ENCODE measurements at regions of chr15 and their contacts with region 1.

Region 1: DNA sequence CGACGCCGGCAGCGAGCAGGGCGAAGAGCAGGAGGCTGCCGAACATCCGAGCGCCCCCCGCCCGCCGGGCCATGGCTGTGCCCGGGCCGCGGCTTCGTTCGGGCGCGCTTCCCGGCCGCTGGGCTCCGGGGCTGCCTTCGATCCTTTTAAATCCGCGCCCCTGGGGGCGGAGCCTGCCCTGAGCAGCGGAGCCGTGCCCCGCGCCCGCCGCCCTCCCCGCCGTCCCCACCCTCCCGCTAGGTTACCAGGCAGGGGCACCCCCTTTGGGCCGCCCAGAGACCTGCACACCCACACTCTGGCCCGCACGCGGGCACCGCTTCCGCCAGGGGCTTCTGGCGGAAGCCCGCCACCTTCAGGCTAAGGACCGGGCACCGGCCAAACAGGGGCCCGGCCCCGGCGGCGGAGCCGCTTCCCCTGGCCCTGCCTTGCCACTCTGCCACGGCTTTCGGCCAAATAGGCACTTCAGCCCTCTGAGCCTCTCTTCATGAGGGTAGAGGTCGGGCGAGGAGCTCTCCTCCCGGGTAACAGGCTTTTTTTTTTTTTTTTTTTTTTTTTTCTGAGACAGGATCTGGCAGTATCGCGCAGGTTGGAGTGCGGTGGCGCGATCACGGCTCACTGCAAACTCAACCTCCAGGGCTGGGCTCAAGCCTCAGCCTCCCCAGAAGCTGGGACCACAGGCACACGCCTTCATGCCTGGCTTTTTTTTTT is at the start of gene NMB:
- DNase-seq: peak; percentile 91
- ATAC-seq: peak; percentile 73
- H3K4me3 Mint-ChIP-seq: peak within 1 kb of the TSS; percentile 77
- H3K27ac Mint-ChIP-seq: 0 out of 2 replicates have a peak within 1 kb of the TSS, but pooled peaks have one; percentile 53
- H3K4me1 Mint-ChIP-seq: peaks cover 35% of the 10 kb centered on the region
- H3K27me3 Mint-ChIP-seq: peaks cover 21% of the 10 kb centered on the region
- CTCF ChIP-seq: peak; percentile 44; the same call in 1 of the 2 replicates
- total RNA-seq, gene NMB: 14.9 to 16.2 TPM (median 15.3 TPM) in 3 replicates

Region 2: DNA sequence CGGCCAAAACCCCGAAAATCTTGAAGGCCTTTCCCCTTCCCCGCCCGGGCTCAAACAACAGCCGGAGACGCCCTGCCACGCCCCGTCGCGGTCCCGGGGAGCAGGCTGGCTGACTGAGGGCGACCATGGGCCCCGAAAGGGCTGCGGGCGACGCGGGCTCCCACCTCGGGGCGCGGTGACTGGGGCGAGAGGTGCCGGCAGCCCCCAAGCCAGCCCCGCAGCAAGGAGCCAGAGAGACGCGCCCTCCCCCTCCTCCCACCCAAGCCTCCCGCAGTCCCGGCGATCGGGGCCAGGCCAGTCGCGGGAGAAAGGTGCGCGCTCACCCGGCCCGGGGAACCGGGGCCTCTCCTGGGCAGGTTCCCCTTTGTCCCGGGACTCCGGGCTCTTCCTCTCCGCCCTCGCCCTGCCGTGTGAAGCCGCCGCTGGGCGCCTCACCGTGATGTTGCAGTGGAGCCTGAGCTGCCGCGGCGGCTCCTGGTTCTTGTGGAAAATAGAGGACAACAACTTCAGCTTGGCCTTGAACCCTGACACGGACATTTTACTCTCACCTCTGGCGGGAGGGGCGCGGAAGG is 88.0 kb before region 1 on chr15:
- CTCF ChIA-PET with region 1: interaction called, 15 read pairs
- POLR2A ChIA-PET with region 1: no interaction called
- DNase-seq: peak; percentile 45
- ATAC-seq: peak; percentile 40
- H3K4me3 Mint-ChIP-seq: peak overlapping the region; percentile 82
- H3K27ac Mint-ChIP-seq: no peak overlapping the region
- H3K4me1 Mint-ChIP-seq: peaks cover 11% of the 10 kb centered on the region
- H3K27me3 Mint-ChIP-seq: no peaks in the 10 kb centered on the region; the same call in 1 of the 2 replicates
- CTCF ChIP-seq: no peak

Region 3: GRCh38 chr15:84600851-84601838 is 57.1 kb before region 1 on chr15 and contains the start of gene ZSCAN2:
- CTCF ChIA-PET with region 1: interaction called, 63 read pairs
- POLR2A ChIA-PET with region 1: no interaction called
- DNase-seq: peak; percentile 98
- ATAC-seq: peak; percentile 83
- H3K4me3 Mint-ChIP-seq: peak within 1 kb of the TSS; percentile 87
- H3K27ac Mint-ChIP-seq: peak within 1 kb of the TSS; percentile 78
- H3K4me1 Mint-ChIP-seq: peaks cover 48% of the 10 kb centered on the region
- H3K27me3 Mint-ChIP-seq: no peaks in the 10 kb centered on the region
- CTCF ChIP-seq: no peak
- total RNA-seq, gene ZSCAN2: 39.6 to 51.9 TPM (median 44.4 TPM) in 3 replicates

Region 4: GRCh38 chr15:84716036-84716799 is 58.0 kb after region 1 on chr15 and contains the start of gene SEC11A:
- CTCF ChIA-PET with region 1: interaction called, 5 read pairs
- POLR2A ChIA-PET with region 1: interaction called, 16 read pairs
- DNase-seq: peak; percentile 94
- ATAC-seq: peak; percentile 96
- H3K4me3 Mint-ChIP-seq: peak within 1 kb of the TSS; percentile 91
- H3K27ac Mint-ChIP-seq: peak within 1 kb of the TSS; percentile 97
- H3K4me1 Mint-ChIP-seq: peaks cover 28% of the 10 kb centered on the region
- H3K27me3 Mint-ChIP-seq: no peaks in the 10 kb centered on the region
- CTCF ChIP-seq: no peak
- total RNA-seq, gene SEC11A: 214 to 228 TPM (median 217 TPM) in 3 replicates

Region 5: DNA sequence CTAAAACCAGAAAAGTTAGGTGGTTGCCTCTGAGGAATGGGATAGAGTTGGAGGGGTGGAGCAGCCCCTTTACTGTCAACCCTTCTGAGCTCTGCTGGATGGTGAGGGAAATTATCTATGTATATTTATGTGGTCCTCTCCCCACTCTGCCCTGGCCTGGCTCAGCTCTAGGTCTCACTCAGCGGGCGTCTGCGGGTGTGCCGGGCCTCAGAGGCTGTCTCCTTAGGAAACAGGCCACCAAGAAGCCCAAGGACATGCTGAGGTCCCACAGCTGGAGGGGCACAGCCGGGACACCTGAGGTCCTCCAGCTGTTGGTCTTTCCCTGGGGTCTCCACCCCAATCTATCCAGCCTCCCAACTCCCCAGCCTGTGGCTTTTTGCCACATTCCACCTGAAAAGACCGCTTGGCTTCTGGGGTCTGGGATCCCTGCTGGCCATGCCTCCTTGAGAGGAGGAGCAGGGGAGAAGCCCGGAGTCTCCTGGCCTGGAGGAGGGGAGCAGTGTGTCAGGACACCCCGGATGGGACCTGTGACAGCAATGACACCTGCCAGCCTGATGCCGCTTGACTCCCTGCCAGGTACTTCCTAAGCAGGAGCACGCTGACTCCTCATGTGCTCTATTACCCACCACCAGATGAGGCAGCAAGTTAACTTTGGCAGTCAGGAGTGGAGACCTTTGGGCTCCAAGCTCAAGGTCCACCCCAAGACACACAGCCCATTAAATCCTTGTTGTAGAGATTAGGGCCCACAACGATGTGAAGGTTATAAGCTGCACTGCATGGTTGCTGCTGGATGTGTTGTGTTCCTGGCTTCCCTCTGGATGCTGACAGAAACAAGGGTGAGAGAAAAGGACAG is 225.9 kb after region 1 on chr15 and contains the start of gene SLC28A1:
- CTCF ChIA-PET with region 1: interaction called, 14 read pairs
- POLR2A ChIA-PET with region 1: no interaction called
- DNase-seq: no peak
- ATAC-seq: no peak
- H3K4me3 Mint-ChIP-seq: no peak within 1 kb of the TSS
- H3K27ac Mint-ChIP-seq: peak within 1 kb of the TSS; percentile 1; the same call in 1 of the 2 replicates
- H3K4me1 Mint-ChIP-seq: peaks cover 6% of the 10 kb centered on the region
- H3K27me3 Mint-ChIP-seq: no peaks in the 10 kb centered on the region
- CTCF ChIP-seq: no peak
- total RNA-seq, gene SLC28A1: 0.14 to 0.16 TPM in 2 of 3 replicates, not detected in the other

Measured in WTC11 (cell line).